Right ventricle myocardium inferior (tissue), 1 donor: ENCODE measurements at regions of chr4 and their contacts with region 1.

Region 1: GRCh38 chr4:153634738-153635353 is 49.2 kb upstream of the TLR2 start:
- DNase-seq: no peak
- ATAC-seq: peak; percentile 39

Region 2: GRCh38 chr4:153750197-153750817 is 115.5 kb after region 1 on chr4:
- intact Hi-C with region 1: loop called (anchors 2 kb)
- DNase-seq: no peak
- ATAC-seq: peak; percentile 57